ENCODE measurements at regions of chr2 and their contacts with region 1.

Region 1: DNA sequence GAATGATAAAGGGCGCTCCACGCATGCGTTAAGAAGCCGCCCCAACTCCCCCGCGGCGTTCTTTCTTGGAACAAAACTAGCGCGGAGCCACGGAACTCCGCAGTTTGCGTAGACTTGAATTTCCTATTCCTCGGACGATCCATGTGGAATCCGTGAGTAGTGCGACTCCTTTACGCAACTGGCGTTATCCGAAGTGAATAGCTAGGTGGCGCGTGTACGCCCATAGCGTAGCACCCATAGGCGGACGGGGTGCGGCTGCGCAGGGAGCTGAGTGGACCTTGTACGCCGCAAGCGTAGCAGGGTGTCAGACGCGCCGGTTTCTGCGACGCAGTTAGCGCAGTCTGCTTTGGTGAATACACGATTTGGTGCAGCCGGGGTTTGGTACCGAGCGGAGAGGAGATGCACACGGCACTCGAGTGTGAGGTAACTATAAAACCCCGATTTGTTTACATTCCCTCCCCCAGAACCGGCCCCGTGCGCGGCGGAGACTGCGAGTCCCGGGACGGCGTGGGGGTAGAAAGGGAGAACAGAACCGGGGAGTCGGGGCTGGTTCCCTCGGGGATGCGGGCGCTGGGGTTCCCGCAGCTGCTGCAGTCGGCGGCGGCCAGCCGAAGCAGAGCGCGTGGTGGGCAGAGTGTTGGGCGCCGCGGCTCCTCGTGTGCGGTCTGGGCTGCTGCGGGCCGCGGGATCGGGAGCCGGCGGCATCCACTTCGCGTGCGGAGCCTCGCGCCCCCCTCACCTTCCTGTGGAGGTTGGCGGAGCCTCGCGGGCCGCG is at the start of gene SLC39A10:
- DNase-seq: peak; percentile 97
- H3K4me3 ChIP-seq: peak within 1 kb of the TSS; percentile 93
- H3K27ac ChIP-seq: peak within 1 kb of the TSS; percentile 66
- H3K4me1 ChIP-seq: peaks cover 21% of the 10 kb centered on the region
- CTCF ChIP-seq: peak; percentile 35; the same call in 1 of the 2 replicates
- total RNA-seq, gene SLC39A10: 14.7 and 19.6 TPM in 2 replicates

Region 2: DNA sequence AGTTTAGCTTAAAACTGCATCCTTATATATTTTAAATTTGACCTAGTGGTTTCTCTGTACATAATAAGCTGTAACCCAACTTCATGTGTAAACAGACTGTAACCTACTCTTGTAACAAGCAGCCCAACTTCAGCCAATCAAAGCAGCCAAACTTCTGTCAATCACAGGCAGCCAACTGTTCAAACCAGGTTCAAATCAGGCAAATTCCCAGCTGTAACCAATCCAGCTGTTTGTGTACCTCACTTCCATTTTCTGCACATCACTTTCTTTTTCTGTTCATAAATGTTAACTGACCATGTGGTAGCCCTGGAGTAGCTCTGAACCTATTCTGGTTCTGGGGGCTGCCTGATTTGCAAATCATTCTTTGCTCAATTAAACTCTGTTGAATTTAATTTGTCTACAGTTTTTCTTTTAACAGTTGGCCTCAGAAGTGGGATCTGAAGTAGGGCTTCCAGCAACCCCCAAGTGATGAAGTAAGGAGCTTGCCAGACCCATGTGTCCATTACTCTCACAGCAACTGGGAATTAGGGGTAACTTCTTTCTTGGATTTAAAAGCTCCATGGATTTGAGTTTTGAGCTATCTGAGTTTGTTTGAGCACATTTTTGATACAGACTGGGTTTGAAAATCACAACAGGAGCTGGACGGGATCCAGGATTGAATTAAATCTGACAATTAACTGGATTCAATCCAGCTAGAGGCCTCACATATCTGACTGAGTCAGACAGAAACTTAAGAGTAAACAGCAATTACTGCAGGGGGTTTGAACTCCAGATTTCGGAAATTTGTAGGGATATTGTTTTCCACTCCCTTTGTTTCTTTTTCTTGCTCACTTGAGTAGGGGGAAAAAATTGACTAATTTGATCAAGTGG is 1569.7 kb before region 1 on chr2:
- CTCF ChIA-PET with region 1: no interaction called
- POLR2A ChIA-PET with region 1: no interaction called
- intact Hi-C with region 1: loop called (anchors 10 kb)
- DNase-seq: no peak
- H3K4me3 ChIP-seq: no peak overlapping the region
- H3K27ac ChIP-seq: no peak overlapping the region
- H3K4me1 ChIP-seq: peaks cover 10% of the 10 kb centered on the region
- CTCF ChIP-seq: no peak

Region 3: GRCh38 chr2:195038145-195038544 is 618.9 kb before region 1 on chr2:
- CTCF ChIA-PET with region 1: no interaction called
- POLR2A ChIA-PET with region 1: no interaction called
- intact Hi-C with region 1: no loop called
- DNase-seq: no peak
- H3K4me3 ChIP-seq: no peak overlapping the region
- H3K27ac ChIP-seq: no peak overlapping the region
- H3K4me1 ChIP-seq: no peaks in the 10 kb centered on the region
- CTCF ChIP-seq: no peak

Region 4: DNA sequence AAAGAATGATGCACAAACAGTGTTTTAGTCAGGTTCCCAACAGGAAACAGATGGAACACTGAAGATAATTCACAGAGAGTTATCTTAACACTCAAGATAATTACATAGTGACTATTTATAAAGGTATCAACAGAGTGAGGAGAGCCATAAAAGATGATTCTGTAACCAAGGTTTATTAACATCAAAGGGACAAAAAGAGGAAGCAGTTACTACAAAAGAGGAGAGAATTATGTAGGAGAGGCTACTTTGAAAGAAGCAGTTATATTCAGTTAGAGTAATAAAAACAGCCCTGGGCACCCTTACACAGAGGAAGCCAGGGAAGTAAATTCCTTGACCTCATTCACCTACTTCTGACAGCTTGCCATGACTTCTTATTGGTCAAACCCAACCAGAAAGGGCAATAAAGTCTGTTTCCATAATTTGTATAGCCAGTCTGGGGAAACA is 326.5 kb before region 1 on chr2:
- CTCF ChIA-PET with region 1: no interaction called
- POLR2A ChIA-PET with region 1: interaction called, 5 read pairs
- intact Hi-C with region 1: loop called (anchors 5 kb)
- DNase-seq: peak; percentile 62
- H3K4me3 ChIP-seq: peak overlapping the region; percentile 5
- H3K27ac ChIP-seq: peak overlapping the region; percentile 67
- H3K4me1 ChIP-seq: peaks cover 42% of the 10 kb centered on the region
- CTCF ChIP-seq: no peak

Region 5: GRCh38 chr2:195498176-195498575 is 158.9 kb before region 1 on chr2:
- CTCF ChIA-PET with region 1: interaction called, 9 read pairs
- POLR2A ChIA-PET with region 1: interaction called, 6 read pairs
- intact Hi-C with region 1: loop called (anchors 1 kb)
- DNase-seq: peak; percentile 67
- H3K4me3 ChIP-seq: no peak overlapping the region
- H3K27ac ChIP-seq: no peak overlapping the region
- H3K4me1 ChIP-seq: peaks cover 30% of the 10 kb centered on the region
- CTCF ChIP-seq: peak; percentile 84

Region 6: DNA sequence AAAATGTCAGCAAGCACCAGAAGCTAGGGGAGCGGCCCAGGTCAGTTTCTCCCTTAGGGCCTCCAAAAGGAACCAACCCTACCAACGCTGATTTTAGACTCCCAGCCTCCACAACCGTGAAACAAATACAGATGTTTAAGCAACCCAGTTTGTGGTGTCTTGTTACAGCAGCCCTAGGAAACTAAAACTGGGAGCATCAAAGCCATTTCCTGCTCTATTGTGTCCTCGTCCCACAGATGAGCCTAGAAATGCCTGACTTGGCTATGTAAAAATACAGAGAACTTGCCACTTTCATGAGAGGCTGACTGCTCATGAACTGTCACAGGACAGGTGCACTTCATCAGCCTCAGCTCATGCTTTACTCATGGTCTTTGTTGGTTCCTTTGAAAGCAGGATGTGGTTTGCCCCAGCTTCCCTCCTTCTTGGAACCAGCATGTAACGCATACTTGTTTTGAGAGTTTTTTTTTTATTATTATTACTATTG is 97.6 kb before region 1 on chr2:
- CTCF ChIA-PET with region 1: interaction called, 6 read pairs
- POLR2A ChIA-PET with region 1: interaction called, 22 read pairs
- intact Hi-C with region 1: loop called (anchors 1 kb)
- DNase-seq: peak; percentile 97
- H3K4me3 ChIP-seq: peak overlapping the region; percentile 38
- H3K27ac ChIP-seq: peak overlapping the region; percentile 95
- H3K4me1 ChIP-seq: peaks cover 68% of the 10 kb centered on the region
- CTCF ChIP-seq: no peak

Region 7: GRCh38 chr2:196068271-196069209 is 411.5 kb after region 1 on chr2 and contains the start of gene DNAH7:
- CTCF ChIA-PET with region 1: no interaction called
- POLR2A ChIA-PET with region 1: no interaction called
- intact Hi-C with region 1: loop called (anchors 5 kb)
- DNase-seq: peak; percentile 81
- H3K4me3 ChIP-seq: peak within 1 kb of the TSS; percentile 67
- H3K27ac ChIP-seq: no peak within 1 kb of the TSS
- H3K4me1 ChIP-seq: peaks cover 5% of the 10 kb centered on the region
- CTCF ChIP-seq: peak; percentile 96
- total RNA-seq, gene DNAH7: not detected in 2 replicates

Region 8: GRCh38 chr2:197152451-197153228 is 1495.6 kb after region 1 on chr2:
- CTCF ChIA-PET with region 1: no interaction called
- POLR2A ChIA-PET with region 1: no interaction called
- intact Hi-C with region 1: loop called (anchors 10 kb)
- DNase-seq: peak; percentile 94
- H3K4me3 ChIP-seq: peak overlapping the region; percentile 56
- H3K27ac ChIP-seq: peak overlapping the region; percentile 99
- H3K4me1 ChIP-seq: peaks cover 81% of the 10 kb centered on the region
- CTCF ChIP-seq: peak; percentile 64

Measured in OCI-LY7 (cell line).